WTC11 (cell line): ENCODE measurements at regions of chr2 and their contacts with region 1.

Region 1: GRCh38 chr2:15939854-15940660 is at the start of gene MYCN:
- DNase-seq: peak; percentile 90
- ATAC-seq: peak; percentile 54
- H3K4me3 Mint-ChIP-seq: peak within 1 kb of the TSS; percentile 94
- H3K27ac Mint-ChIP-seq: peak within 1 kb of the TSS; percentile 92
- H3K4me1 Mint-ChIP-seq: peaks cover 56% of the 10 kb centered on the region
- H3K27me3 Mint-ChIP-seq: no peaks in the 10 kb centered on the region
- CTCF ChIP-seq: no peak; the same call in 1 of the 2 replicates
- total RNA-seq, gene MYCN: 68.3 to 77.5 TPM (median 75.3 TPM) in 3 replicates

Region 2: DNA sequence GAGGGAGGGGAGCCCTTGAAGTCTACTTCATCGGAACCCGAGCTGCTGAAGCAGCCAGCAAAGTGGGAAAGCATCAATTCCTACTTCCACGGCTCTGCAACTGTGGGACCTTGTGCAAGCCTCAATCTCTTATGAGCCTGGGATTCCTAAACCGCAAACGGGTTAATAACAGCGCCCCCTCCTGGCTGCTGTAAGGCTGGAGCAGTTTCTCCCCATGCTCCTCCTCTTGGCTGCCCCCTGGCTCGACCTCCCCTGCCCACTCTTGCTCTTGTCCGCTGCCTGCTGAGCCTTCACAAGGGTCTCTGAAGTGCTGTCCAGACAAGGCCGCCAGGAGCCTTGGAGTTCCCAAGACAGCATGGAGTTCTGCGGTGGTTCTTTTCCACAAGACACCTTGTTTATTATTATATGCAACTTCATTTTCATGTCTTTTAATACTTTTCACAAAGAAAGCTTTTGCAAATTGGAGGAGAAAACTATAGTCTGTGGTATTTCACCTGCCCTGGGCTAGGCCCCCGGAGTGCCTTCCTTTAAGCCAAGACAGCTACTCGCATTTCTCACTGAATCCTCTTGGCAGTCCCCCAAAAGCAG is 191.2 kb before region 1 on chr2:
- CTCF ChIA-PET with region 1: interaction called, 11 read pairs
- POLR2A ChIA-PET with region 1: no interaction called
- DNase-seq: peak; percentile 86
- ATAC-seq: peak; percentile 66
- H3K4me3 Mint-ChIP-seq: no peak overlapping the region
- H3K27ac Mint-ChIP-seq: no peak overlapping the region
- H3K4me1 Mint-ChIP-seq: peaks cover 22% of the 10 kb centered on the region
- H3K27me3 Mint-ChIP-seq: peaks cover 2% of the 10 kb centered on the region; the same call in 1 of the 2 replicates
- CTCF ChIP-seq: peak; percentile 94

Region 3: GRCh38 chr2:15826273-15826717 is 113.8 kb before region 1 on chr2:
- CTCF ChIA-PET with region 1: interaction called, 10 read pairs
- POLR2A ChIA-PET with region 1: interaction called, 3 read pairs
- DNase-seq: peak; percentile 61
- ATAC-seq: peak; percentile 97
- H3K4me3 Mint-ChIP-seq: no peak overlapping the region
- H3K27ac Mint-ChIP-seq: no peak overlapping the region
- H3K4me1 Mint-ChIP-seq: peaks cover 16% of the 10 kb centered on the region
- H3K27me3 Mint-ChIP-seq: no peaks in the 10 kb centered on the region; the same call in 1 of the 2 replicates
- CTCF ChIP-seq: no peak

Region 4: DNA sequence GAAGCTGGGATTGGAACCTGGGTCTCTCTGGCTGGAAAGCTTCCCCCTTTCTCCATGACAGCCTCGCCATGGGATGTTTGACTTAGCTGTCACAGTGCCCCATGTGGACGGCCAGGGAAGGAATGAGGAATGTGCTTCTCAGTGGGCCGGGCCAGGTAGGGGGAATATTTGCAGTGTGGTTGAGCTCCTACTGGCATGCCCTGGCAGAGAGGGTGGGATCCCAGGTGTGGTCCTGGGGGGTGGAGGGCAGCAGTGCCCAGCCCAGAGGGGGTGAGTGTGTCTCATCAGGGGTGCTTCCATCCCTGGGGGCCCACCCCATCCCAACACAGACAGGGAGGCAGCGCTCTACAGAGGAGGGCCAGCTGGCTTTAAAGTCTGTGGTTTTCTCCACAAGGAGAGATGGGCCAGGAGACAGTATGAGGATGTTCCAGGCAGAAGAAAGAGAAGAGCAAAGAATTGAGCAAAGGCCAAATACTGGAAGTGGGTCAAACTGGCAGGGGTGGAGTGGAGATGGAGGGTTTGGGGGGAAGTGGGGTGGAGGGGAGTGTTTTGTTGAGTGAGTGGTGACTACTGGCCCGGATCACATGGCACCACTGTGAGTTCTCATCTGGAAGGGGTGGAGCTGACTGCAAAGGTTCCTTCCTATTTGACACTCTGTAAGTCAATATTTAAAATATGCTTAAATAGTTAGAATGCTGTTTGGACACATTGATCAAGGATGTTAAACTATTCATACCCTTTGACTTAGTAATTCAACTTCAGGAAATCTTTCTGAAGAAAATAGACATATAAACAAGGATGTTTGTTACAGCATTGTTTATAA is 94.3 kb after region 1 on chr2:
- CTCF ChIA-PET with region 1: interaction called, 39 read pairs
- POLR2A ChIA-PET with region 1: interaction called, 4 read pairs
- DNase-seq: peak; percentile 75
- ATAC-seq: peak; percentile 93
- H3K4me3 Mint-ChIP-seq: no peak overlapping the region
- H3K27ac Mint-ChIP-seq: no peak overlapping the region
- H3K4me1 Mint-ChIP-seq: peaks cover 51% of the 10 kb centered on the region
- H3K27me3 Mint-ChIP-seq: peaks cover 2% of the 10 kb centered on the region; the same call in 1 of the 2 replicates
- CTCF ChIP-seq: peak; percentile 58

Region 5: DNA sequence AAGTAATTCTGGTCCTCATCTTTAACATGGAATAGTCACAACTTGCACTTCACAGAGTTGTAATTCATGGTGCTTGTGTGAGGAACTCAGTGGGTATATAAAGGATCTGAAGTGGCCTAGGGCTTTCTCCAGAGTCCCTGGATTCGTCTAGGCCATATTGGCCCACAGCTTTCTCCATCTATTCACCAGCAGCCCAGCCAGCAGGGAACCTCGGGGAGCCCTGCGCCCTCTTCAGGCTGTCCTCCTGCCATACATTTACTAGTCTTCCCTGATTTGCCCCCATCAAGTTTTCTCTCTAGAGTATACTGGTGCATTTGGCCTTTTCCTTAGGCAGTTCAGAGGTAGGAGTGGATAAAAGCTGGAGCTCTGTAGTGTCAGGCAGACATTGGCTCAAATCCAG is 278.6 kb after region 1 on chr2:
- CTCF ChIA-PET with region 1: interaction called, 15 read pairs
- POLR2A ChIA-PET with region 1: no interaction called
- DNase-seq: peak; percentile 54
- ATAC-seq: peak; percentile 88
- H3K4me3 Mint-ChIP-seq: no peak overlapping the region
- H3K27ac Mint-ChIP-seq: 0 out of 2 replicates have a peak overlapping the region, but pooled peaks have one; percentile 84
- H3K4me1 Mint-ChIP-seq: peaks cover 25% of the 10 kb centered on the region
- H3K27me3 Mint-ChIP-seq: no peaks in the 10 kb centered on the region; the same call in 1 of the 2 replicates
- CTCF ChIP-seq: no peak

Region 6: DNA sequence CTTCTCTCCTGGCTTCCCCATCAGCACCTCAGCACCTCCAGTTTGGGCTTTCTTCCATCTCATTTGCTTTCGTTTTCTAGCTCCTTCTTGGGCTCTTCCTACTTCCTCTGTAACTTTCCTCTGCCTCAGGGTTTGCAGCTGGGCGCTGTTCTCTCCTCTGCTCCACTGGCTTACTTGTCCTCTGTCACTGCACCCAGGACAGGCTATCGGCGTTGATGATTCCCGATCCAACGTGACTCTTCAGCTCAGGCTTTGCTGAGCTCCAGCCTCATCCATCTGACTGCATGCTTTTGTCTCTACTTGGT is 363.2 kb after region 1 on chr2:
- CTCF ChIA-PET with region 1: interaction called, 15 read pairs
- POLR2A ChIA-PET with region 1: no interaction called
- DNase-seq: no peak
- ATAC-seq: peak; percentile 46
- H3K4me3 Mint-ChIP-seq: no peak overlapping the region
- H3K27ac Mint-ChIP-seq: no peak overlapping the region; the same call in 1 of the 2 replicates
- H3K4me1 Mint-ChIP-seq: peaks cover 25% of the 10 kb centered on the region
- H3K27me3 Mint-ChIP-seq: no peaks in the 10 kb centered on the region
- CTCF ChIP-seq: no peak

Region 7: DNA sequence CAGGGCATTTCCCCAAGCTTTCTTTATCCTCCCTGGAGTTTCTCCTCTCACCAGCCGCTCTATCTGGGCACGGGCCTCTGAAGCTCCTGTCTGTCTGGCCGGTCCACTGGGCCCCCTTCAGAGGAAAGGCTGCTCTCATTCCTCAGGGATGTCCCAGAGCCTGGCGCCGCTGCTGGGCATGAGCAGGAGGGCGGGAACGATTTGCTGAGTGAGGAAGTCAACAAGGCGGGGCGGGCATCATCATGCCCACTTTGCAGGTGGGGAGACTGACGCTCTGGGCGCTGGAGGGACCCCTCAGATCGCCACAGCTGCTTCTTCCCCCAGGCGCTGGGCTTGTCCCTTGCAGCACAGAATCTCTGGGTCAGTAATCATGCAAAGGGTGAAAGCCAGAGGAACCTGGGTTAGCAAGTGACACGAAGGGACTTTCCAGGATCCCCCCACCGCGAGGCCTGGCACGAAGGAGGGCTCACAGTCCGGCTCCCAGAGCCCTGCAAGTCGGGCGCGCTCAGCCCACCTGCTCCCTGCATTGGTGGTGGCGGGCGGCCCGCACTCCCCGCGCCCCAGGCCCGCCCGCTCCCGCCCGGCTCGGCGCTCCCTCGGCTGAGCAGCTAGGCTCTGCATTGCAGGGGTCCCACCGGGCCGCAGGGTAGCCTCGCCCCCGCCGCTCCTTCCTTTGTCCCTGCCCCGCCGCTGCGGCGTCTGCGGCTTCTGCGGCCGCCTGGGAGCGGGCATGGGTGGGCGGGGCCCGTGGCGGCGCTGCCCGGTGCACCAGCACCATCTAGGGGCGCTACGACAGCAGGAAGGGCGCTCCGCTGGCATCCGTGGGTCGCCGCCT is 567.8 kb after region 1 on chr2:
- CTCF ChIA-PET with region 1: interaction called, 27 read pairs
- POLR2A ChIA-PET with region 1: interaction called, 3 read pairs
- DNase-seq: peak; percentile 73
- ATAC-seq: peak; percentile 85
- H3K4me3 Mint-ChIP-seq: peak overlapping the region; percentile 73
- H3K27ac Mint-ChIP-seq: no peak overlapping the region
- H3K4me1 Mint-ChIP-seq: peaks cover 10% of the 10 kb centered on the region
- H3K27me3 Mint-ChIP-seq: peaks cover 19% of the 10 kb centered on the region
- CTCF ChIP-seq: peak; percentile 48; the same call in 1 of the 2 replicates